Activated T-helper 1 cell treated with anti-CD3 and anti-CD28 coated beads, Interleukin-12 subunit alpha, Interleukin-12 subunit beta, Interleukin-2, Interleukin-4 antibody, amounts not matched to agents 30 ng/mL and 10 ng/mL and 1 ng/mL, durations not matched to agents 14 hours and 24 hours and 36 hours (primary cell): ENCODE measurements at regions of chr14 and their contacts with region 1.

Region 1: GRCh38 chr14:77314043-77314442 is 6.6 kb downstream of the POMT2 start:
- DNase-seq: no peak
- H3K4me3 Mint-ChIP-seq: no peak overlapping the region
- H3K27ac Mint-ChIP-seq: no peak overlapping the region
- H3K4me1 Mint-ChIP-seq: peaks cover 1% of the 10 kb centered on the region
- H3K27me3 Mint-ChIP-seq: no peaks in the 10 kb centered on the region

Region 2: GRCh38 chr14:77151918-77152588 is 162.0 kb before region 1 on chr14:
- intact Hi-C with region 1: loop called (anchors 1 kb)
- DNase-seq: no peak
- H3K4me3 Mint-ChIP-seq: no peak overlapping the region
- H3K27ac Mint-ChIP-seq: no peak overlapping the region
- H3K4me1 Mint-ChIP-seq: no peaks in the 10 kb centered on the region
- H3K27me3 Mint-ChIP-seq: peaks cover 20% of the 10 kb centered on the region

Region 3: GRCh38 chr14:77212943-77213678 is 100.9 kb before region 1 on chr14:
- intact Hi-C with region 1: loop called (anchors 5 kb)
- DNase-seq: peak; percentile 9
- H3K4me3 Mint-ChIP-seq: no peak overlapping the region
- H3K27ac Mint-ChIP-seq: no peak overlapping the region
- H3K4me1 Mint-ChIP-seq: no peaks in the 10 kb centered on the region
- H3K27me3 Mint-ChIP-seq: peaks cover 13% of the 10 kb centered on the region

Region 4: DNA sequence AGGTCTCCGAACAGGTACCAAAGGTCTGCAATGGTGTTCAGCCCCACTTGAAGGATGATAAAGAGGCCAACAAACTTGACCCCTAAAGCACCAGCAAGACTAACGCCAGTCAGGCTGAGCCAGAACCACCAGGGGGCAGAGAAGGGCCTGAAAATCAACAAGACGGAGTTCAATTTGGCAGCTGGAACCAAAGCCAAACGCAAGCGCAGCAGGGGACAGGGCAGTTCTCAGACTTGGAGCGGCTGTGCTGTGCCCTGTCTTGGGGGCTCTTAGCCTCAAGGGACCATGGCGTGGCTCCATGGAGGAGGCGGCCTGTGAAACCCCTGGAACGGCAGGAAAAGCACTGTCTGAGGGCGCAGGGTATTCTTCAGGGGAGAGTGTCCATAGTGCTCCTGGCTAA is 12.9 kb before region 1 on chr14:
- intact Hi-C with region 1: loop called (anchors 1 kb)
- DNase-seq: peak; percentile 16
- H3K4me3 Mint-ChIP-seq: no peak overlapping the region
- H3K27ac Mint-ChIP-seq: no peak overlapping the region
- H3K4me1 Mint-ChIP-seq: peaks cover 24% of the 10 kb centered on the region
- H3K27me3 Mint-ChIP-seq: no peaks in the 10 kb centered on the region